Activated B cell treated with CpG ODN at 0.5 μM for 24 hours (primary cell): ENCODE measurements at regions of chr16 and their contacts with region 1.

Region 1: DNA sequence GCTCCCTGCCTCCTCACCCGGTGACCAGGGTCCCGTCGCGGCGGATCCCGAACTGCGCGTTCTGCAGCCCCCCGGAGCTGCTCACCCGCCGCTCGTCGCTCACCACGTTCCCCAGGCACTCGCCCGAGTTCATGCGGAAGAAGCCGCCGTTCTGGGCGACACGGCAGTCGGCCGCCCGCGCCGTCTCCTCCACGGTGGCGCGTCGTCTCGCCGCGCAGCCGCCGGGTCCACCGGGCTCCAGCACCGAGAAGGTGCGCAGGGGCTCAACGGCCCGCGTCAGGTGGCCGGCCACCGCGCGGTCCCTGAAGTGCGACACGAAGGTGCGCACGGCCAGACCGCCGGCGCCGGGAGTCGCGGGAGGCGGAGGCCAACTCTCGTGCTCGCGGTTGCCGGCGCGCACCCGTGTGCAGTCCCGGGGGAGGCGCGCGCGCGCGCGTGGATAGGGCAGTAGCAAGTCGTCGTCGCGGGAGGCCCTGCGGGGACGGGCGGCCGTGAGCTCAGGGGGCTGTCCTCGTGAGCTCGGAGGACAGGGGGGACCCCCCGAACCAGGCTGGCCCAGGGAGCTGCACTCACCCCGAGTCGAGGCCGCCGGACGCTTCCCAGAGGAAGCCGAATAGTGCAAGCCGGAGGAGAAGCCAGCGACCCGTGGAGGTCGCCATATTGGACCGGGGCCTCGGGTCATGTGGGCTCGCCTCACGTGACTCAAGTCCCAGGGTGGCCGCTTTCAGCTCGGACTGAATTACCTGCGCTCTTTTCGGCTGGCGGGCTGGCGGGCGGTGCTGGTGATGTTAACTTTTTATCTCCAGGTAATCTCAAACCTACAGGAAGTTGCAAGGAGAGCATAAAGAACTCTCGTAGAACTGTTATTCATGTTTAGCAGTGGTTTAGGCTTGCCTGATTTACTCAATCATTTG is at the start of gene NAGPA:
- DNase-seq: peak; percentile 82
- ATAC-seq: peak; percentile 87
- H3K4me3 Mint-ChIP-seq: peak within 1 kb of the TSS; percentile 87
- H3K27ac Mint-ChIP-seq: peak within 1 kb of the TSS; percentile 91
- H3K4me1 Mint-ChIP-seq: peaks cover 18% of the 10 kb centered on the region
- H3K27me3 Mint-ChIP-seq: no peaks in the 10 kb centered on the region
- CTCF ChIP-seq: no peak
- total RNA-seq, gene NAGPA: 23.8 and 24.2 TPM in 2 replicates

Region 2: DNA sequence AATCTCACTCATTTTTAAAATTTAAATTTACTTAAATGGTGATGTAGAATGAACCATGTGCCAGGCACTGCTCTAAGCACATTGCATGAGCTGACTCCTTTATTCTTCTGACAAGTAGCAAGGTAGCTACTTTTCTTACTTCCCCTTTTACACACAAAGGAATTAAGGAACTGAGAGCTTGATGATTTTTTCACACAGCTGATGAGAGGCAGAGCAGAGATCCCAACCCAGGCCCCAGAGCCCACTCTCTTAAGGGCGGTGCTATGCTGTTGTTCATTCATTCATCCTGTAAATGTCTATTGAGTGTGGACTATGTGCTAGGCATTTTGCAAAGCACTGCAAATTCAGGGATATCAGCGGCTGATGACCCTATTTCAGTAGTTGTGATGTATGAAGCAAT is 57.4 kb before region 1 on chr16:
- CTCF ChIA-PET with region 1: no interaction called
- POLR2A ChIA-PET with region 1: interaction called, 4 read pairs
- intact Hi-C with region 1: loop called (anchors 5 kb)
- DNase-seq: no peak
- ATAC-seq: peak; percentile 98
- H3K4me3 Mint-ChIP-seq: no peak overlapping the region
- H3K27ac Mint-ChIP-seq: peak overlapping the region; percentile 3
- H3K4me1 Mint-ChIP-seq: peaks cover 9% of the 10 kb centered on the region
- H3K27me3 Mint-ChIP-seq: peaks cover 17% of the 10 kb centered on the region
- CTCF ChIP-seq: no peak

Region 3: GRCh38 chr16:5018793-5019192 is 14.7 kb before region 1 on chr16:
- CTCF ChIA-PET with region 1: no interaction called
- POLR2A ChIA-PET with region 1: interaction called, 10 read pairs
- intact Hi-C with region 1: no loop called
- DNase-seq: no peak
- ATAC-seq: no peak
- H3K4me3 Mint-ChIP-seq: no peak overlapping the region
- H3K27ac Mint-ChIP-seq: no peak overlapping the region
- H3K4me1 Mint-ChIP-seq: no peaks in the 10 kb centered on the region
- H3K27me3 Mint-ChIP-seq: no peaks in the 10 kb centered on the region
- CTCF ChIP-seq: no peak

Region 4: DNA sequence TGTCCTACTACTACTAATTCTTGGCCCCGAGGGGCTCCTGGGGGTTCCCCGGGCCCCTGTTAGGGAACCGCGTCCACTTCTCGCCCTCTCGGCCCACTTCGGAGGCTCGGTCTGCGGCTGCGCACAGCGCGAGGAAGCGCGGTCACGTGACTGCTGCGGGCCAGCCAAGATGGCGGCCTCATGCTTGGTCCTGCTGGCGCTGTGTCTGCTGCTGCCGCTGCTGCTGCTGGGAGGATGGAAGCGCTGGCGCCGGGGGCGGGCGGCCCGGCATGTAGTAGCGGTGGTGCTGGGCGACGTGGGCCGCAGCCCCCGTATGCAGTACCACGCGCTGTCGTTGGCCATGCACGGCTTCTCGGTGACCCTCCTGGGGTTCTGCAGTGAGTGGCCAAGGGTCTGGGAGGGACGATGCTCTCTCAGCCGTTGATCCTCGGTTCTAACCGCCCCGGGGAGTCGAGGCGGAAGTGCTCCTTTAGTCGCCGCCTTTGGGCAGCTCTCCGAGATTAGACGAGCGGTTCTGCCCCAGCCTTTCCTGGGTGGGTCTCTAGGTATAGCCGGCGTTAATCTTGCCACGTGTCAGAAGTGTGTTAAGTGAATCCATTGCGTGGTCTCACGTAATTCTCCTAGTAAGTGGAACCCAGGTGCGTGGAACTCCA is 38.3 kb after region 1 on chr16 and contains the start of gene ALG1:
- CTCF ChIA-PET with region 1: no interaction called
- POLR2A ChIA-PET with region 1: interaction called, 19 read pairs
- intact Hi-C with region 1: loop called (anchors 1 kb)
- DNase-seq: peak; percentile 86
- ATAC-seq: peak; percentile 91
- H3K4me3 Mint-ChIP-seq: peak within 1 kb of the TSS; percentile 96
- H3K27ac Mint-ChIP-seq: peak within 1 kb of the TSS; percentile 94
- H3K4me1 Mint-ChIP-seq: peaks cover 25% of the 10 kb centered on the region
- H3K27me3 Mint-ChIP-seq: peaks cover 3% of the 10 kb centered on the region
- CTCF ChIP-seq: no peak
- total RNA-seq, gene ALG1: 25.8 and 28.2 TPM in 2 replicates